Activated CD4-positive, alpha-beta T cell treated with anti-CD3 and anti-CD28 coated beads, Interleukin-2, amount 10 ng/mL, durations not matched to agents 24 days and 14 days (primary cell): ENCODE measurements at regions of chr14 and their contacts with region 1.

Region 1: GRCh38 chr14:92121670-92122350 is at the starts of genes CPSF2 and NDUFB1:
- DNase-seq: peak; percentile 96
- H3K4me3 Mint-ChIP-seq: peak within 1 kb of the TSS; percentile 98
- H3K27ac Mint-ChIP-seq: peak within 1 kb of the TSS; percentile 100
- H3K4me1 Mint-ChIP-seq: peaks cover 31% of the 10 kb centered on the region
- H3K27me3 Mint-ChIP-seq: no peaks in the 10 kb centered on the region
- total RNA-seq, gene CPSF2: 111 and 120 TPM in 2 replicates
- total RNA-seq, gene NDUFB1: 76.1 and 77.9 TPM in 2 replicates

Region 2: GRCh38 chr14:91354979-91355685 is 766.7 kb before region 1 on chr14:
- intact Hi-C with region 1: no loop called
- DNase-seq: no peak
- H3K4me3 Mint-ChIP-seq: peak overlapping the region; percentile 22
- H3K27ac Mint-ChIP-seq: peak overlapping the region; percentile 2
- H3K4me1 Mint-ChIP-seq: peaks cover 82% of the 10 kb centered on the region
- H3K27me3 Mint-ChIP-seq: no peaks in the 10 kb centered on the region

Region 3: DNA sequence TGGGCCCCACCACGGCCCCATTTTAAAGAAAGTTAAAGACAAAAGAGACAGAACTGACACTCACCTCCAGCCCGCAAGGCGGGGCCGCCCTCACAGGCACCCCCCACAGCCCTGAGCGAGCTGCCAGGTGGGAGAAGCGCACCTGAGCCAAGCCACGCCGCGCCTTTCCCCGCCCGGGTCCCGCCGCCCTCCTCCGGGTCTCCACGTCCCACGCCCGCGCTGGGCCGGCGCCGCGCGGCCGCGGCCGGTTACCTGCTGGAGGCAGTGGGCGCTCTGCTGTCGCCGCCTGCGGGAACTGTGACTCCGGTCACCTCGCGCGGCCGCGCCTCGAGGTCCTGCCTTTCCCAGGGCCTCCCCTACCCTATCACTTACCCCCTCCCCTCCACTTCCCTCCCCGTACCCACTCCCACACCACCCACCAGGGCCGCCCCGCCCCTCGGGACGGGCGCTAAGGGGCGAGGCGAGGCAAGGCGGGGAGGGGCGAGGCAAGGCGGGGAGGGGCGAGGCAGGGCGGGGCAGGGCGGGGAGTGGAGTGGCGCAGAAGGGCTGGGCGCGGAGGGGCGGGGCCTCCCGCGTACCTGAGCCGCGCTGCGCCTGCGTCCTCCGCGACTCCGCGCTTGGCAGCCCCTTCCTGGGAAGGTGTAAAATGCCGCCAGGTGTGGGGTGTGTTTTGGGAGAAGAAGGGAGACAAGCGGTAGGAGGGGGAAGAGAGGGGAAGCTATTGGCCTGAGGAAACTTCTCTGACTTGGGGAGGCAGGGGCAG is 285.5 kb before region 1 on chr14:
- intact Hi-C with region 1: loop called (anchors 10 kb)
- DNase-seq: peak; percentile 89
- H3K4me3 Mint-ChIP-seq: peak overlapping the region; percentile 93
- H3K27ac Mint-ChIP-seq: peak overlapping the region; percentile 68
- H3K4me1 Mint-ChIP-seq: peaks cover 52% of the 10 kb centered on the region
- H3K27me3 Mint-ChIP-seq: peaks cover 11% of the 10 kb centered on the region

Region 4: GRCh38 chr14:92106143-92106926 is 15.5 kb before region 1 on chr14 and contains the start of gene ATXN3:
- intact Hi-C with region 1: loop called (anchors 1 kb)
- DNase-seq: peak; percentile 98
- H3K4me3 Mint-ChIP-seq: peak within 1 kb of the TSS; percentile 89
- H3K27ac Mint-ChIP-seq: peak within 1 kb of the TSS; percentile 89
- H3K4me1 Mint-ChIP-seq: peaks cover 27% of the 10 kb centered on the region
- H3K27me3 Mint-ChIP-seq: no peaks in the 10 kb centered on the region
- total RNA-seq, gene ATXN3: 23.7 and 25.2 TPM in 2 replicates

Region 5: DNA sequence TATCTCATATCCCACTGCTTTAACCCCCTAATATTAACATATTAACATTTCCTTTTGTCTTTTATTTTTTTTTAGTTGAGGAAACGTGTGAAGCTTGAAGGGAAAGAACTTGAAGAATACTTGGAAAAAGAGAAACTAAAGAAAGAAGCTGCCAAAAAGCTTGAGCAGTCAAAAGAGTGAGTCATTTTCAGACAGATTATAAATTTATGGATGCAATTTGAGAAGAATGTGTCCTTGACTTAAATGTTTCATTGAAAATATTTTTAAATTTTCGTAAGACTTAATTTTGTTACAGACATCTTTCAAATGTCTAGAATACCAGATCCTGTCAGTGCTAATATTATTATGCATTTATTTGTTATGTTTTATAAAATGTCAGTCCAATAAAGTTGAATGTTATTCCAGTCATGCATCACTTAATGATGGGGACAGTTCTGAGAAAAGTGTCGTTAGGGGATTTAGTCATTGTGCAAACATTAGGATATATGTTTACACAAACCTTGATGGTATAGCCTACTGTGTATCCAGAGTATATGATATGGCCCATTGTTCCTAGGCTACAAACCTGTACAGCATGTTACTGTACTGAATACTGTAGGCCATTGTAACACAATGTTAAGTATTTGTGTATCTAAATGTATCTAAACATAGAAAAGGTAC is 32.6 kb after region 1 on chr14:
- intact Hi-C with region 1: no loop called
- DNase-seq: no peak
- H3K4me3 Mint-ChIP-seq: no peak overlapping the region
- H3K27ac Mint-ChIP-seq: no peak overlapping the region
- H3K4me1 Mint-ChIP-seq: peaks cover 8% of the 10 kb centered on the region
- H3K27me3 Mint-ChIP-seq: no peaks in the 10 kb centered on the region

Region 6: DNA sequence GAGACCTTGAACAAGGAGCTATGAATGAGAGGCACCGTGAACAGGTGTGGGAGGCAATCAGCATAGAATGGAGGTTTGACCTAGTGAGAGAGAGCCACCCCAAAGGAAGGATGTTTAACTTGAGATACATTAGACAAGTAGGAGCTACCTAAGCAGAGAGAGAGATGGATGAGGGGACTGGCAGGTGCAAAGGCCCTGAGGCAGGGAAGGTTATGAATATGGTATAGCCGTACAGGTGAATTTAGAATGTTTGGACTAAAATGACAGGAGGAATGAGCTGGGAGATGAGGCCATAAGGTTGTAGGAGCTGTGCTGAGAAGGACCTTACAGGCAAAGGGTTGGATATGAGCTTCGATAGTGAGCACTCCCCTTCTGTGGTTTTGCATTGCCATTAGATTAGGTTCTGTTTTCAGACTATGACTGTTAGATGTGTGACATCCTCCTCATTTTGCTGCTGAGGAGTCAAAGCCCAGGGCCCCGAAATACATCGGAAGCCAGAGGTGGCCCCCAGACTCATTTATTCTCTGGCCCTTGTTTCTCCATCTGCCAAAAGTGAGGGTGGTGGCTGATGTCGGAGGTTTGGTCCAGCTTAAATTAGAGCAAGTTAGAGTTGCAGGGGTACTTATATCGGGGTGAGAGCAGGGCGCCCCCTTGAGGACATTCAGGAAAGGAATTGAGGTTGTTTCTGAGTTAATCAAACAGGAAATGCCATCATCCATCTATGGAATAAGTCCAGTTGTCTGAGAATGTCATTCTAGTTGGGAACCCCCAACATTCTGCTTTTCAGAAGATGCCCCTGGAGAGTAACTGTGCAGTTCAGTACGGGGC is 230.6 kb after region 1 on chr14:
- intact Hi-C with region 1: loop called (anchors 10 kb)
- DNase-seq: peak; percentile 81
- H3K4me3 Mint-ChIP-seq: no peak overlapping the region
- H3K27ac Mint-ChIP-seq: no peak overlapping the region
- H3K4me1 Mint-ChIP-seq: no peaks in the 10 kb centered on the region
- H3K27me3 Mint-ChIP-seq: peaks cover 20% of the 10 kb centered on the region